Activated CD4-positive, alpha-beta memory T cell treated with anti-CD3 and anti-CD28 coated beads, Interleukin-2, amount 10 ng/mL, durations not matched to agents 7 days and 5 days (primary cell): ENCODE measurements at regions of chr15 and their contacts with region 1.

Region 1: GRCh38 chr15:75367913-75368688 is at the start of gene MAN2C1:
- DNase-seq: peak; percentile 93
- H3K4me3 Mint-ChIP-seq: peak within 1 kb of the TSS; percentile 93
- H3K27ac Mint-ChIP-seq: peak within 1 kb of the TSS; percentile 96
- H3K4me1 Mint-ChIP-seq: peaks cover 33% of the 10 kb centered on the region
- H3K27me3 Mint-ChIP-seq: no peaks in the 10 kb centered on the region
- total RNA-seq, gene MAN2C1: 174 to 196 TPM

Region 2: GRCh38 chr15:75178171-75179075 is 189.7 kb before region 1 on chr15:
- CTCF ChIA-PET with region 1: no interaction called
- POLR2A ChIA-PET with region 1: no interaction called
- DNase-seq: no peak
- H3K4me3 Mint-ChIP-seq: no peak overlapping the region
- H3K27ac Mint-ChIP-seq: no peak overlapping the region
- H3K4me1 Mint-ChIP-seq: peaks cover 16% of the 10 kb centered on the region
- H3K27me3 Mint-ChIP-seq: peaks cover 56% of the 10 kb centered on the region

Region 3: DNA sequence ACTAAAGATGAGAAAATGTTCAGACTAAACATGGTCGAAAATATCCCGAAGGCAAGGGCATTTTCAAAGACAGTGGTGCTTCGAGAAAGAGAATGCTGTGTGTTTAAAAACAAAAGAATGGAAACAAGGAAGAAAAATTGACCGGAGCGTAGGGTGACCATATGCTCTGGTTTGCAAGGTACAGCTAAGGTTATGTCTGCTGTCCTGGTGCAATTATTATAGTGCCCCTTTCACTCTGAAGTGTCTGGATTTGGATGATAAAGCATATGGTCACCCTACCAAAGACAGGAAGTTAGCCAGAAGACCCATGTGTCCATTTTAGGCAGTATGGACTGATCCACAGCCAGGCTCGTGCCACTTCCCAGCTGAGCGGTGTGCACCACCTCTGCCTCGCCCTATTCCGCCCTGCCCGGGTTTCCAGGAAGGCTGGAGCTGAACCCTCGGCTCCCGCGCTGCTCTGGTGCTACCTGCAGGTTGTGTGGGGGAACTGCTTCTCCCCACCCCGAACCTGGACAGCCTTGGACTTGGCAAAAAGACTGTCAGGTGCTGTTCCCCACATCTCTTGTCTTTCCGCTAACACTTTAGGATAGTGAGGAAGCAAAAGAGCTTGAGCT is 60.2 kb before region 1 on chr15:
- CTCF ChIA-PET with region 1: no interaction called
- POLR2A ChIA-PET with region 1: no interaction called
- DNase-seq: peak; percentile 28
- H3K4me3 Mint-ChIP-seq: no peak overlapping the region
- H3K27ac Mint-ChIP-seq: no peak overlapping the region
- H3K4me1 Mint-ChIP-seq: peaks cover 27% of the 10 kb centered on the region
- H3K27me3 Mint-ChIP-seq: peaks cover 62% of the 10 kb centered on the region

Region 4: DNA sequence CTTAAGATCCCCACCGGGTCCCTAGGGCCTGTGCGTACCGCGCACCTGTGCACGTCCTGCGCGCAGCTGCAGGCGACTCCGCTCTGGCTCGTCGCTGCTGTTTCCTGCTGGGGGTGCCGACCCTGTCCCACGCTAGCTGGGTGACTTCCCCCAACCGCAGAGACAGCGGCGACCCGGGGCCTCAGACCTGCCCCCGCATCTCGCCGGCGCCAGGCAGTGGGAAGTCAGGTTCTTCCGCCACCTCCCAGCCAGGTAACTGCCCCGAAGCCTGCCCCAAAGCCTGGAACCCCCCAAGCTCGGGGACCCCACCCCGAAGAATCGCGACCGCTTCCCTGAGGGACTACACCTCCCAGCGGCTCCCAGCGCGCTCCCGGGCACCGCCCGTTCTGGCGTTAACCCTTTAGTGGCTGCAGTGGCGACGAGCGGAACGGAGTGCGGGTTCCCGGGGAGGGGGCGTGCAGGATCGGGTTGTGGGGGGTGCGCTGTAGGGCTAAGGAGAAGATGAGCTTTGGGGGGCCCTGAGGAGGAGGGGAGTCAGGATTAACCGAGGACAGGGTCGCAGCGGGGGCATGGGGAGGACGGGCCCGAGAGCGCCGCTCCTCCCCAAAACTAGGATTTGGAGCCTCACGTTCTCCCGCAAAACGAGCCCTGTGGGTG is 20.8 kb before region 1 on chr15:
- CTCF ChIA-PET with region 1: interaction called, 17 read pairs
- POLR2A ChIA-PET with region 1: interaction called, 89 read pairs
- DNase-seq: peak; percentile 29
- H3K4me3 Mint-ChIP-seq: peak overlapping the region; percentile 60
- H3K27ac Mint-ChIP-seq: no peak overlapping the region
- H3K4me1 Mint-ChIP-seq: peaks cover 39% of the 10 kb centered on the region
- H3K27me3 Mint-ChIP-seq: peaks cover 25% of the 10 kb centered on the region

Region 5: DNA sequence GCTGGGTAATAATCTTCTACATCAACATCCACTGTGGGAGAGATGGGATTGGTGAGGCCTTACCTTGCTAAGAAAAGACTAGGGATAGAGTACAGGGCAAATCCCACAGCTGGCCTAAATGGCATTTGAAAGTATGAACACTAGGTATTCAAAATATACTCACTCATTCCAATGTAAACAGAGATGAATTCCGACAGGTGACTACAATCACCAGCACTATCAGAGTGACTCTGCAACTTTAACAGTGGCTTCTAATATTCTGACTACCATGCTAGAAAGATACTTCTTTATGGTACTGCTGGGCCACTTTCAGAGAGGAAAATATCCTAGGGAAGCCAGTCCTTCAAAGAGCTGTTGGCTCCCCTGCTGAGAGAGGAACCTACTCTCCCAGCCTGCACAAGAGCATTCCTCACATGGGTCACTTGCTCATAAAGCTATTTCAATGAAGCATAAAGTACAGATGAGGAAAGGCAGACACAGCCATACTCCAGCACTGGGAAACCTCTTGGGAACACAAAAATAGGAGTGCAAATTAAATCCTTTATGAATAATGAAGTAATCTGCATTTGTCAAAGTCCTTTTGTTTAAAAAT is 21.8 kb after region 1 on chr15:
- CTCF ChIA-PET with region 1: interaction called, 5 read pairs
- POLR2A ChIA-PET with region 1: interaction called, 13 read pairs
- DNase-seq: no peak
- H3K4me3 Mint-ChIP-seq: no peak overlapping the region
- H3K27ac Mint-ChIP-seq: no peak overlapping the region
- H3K4me1 Mint-ChIP-seq: peaks cover 14% of the 10 kb centered on the region
- H3K27me3 Mint-ChIP-seq: no peaks in the 10 kb centered on the region

Region 6: DNA sequence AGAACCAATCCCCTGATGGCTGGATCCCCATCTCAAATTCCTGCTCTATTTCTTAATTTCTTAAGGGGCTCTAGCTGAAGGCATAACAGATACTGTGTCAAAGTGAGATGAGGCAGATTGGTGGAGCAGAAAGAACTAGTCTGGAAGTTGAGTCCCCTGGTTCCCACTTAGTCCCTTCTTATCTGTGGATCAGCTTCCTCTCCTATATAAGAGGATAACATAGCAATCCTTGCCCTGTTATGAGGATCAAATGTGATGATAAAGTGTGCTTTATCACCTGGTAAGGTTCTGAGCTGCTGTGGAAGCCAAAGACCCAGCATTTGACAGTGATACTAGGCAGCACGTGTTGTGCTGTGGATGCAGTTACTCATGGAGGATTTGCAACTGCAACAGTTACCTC is 91.5 kb after region 1 on chr15:
- CTCF ChIA-PET with region 1: interaction called, 109 read pairs
- POLR2A ChIA-PET with region 1: interaction called, 174 read pairs
- DNase-seq: no peak
- H3K4me3 Mint-ChIP-seq: no peak overlapping the region
- H3K27ac Mint-ChIP-seq: no peak overlapping the region
- H3K4me1 Mint-ChIP-seq: peaks cover 6% of the 10 kb centered on the region
- H3K27me3 Mint-ChIP-seq: no peaks in the 10 kb centered on the region

Region 7: DNA sequence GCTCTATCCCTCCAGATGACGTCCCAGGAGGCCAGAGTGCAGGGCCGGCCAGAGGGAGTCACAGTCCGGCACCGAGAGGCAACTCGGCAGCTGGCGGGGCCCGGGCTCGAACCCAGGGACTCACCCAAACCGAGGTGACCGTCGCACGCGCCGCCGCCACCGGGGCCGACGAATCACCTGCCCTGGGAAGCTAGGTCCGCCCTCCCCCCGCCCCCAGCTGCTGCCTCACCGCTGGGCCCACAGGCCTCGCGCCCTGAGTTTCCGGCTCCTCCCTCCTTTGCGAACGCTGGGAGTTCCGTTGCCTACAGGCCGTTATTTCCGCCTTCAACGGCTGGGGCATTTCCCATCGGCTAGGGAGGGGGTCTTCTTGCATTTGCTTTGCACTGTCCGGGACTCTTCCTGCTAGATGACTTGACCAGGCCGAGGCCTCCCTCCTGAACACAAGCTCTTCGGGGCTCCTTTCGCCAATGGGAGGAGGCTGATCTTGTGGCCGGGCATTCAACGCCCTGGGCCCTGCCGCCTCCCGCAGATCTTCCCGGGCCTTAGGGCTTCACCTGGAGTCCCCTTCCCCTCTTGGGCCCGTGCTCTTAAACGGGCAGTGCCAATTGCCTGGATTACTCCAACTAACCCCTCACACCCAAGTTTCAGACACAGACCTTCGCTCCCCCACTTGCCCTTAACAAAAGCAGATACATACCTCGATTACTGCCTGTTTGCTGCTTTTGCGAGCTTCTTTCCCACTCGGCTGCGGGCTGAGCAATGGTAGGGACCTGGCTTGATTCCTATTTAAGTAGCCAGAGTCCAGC is 257.6 kb after region 1 on chr15 and contains the start of gene SNUPN:
- CTCF ChIA-PET with region 1: interaction called, 23 read pairs
- POLR2A ChIA-PET with region 1: interaction called, 22 read pairs
- DNase-seq: peak; percentile 96
- H3K4me3 Mint-ChIP-seq: peak within 1 kb of the TSS; percentile 93
- H3K27ac Mint-ChIP-seq: peak within 1 kb of the TSS; percentile 96
- H3K4me1 Mint-ChIP-seq: peaks cover 38% of the 10 kb centered on the region
- H3K27me3 Mint-ChIP-seq: no peaks in the 10 kb centered on the region
- total RNA-seq, gene SNUPN: 29.6 to 30.9 TPM

Region 8: GRCh38 chr15:75647370-75648155 is 279.5 kb after region 1 on chr15 and contains the start of gene SNX33:
- CTCF ChIA-PET with region 1: interaction called, 53 read pairs
- POLR2A ChIA-PET with region 1: interaction called, 74 read pairs
- DNase-seq: peak; percentile 60
- H3K4me3 Mint-ChIP-seq: peak within 1 kb of the TSS; percentile 79
- H3K27ac Mint-ChIP-seq: no peak within 1 kb of the TSS
- H3K4me1 Mint-ChIP-seq: peaks cover 29% of the 10 kb centered on the region
- H3K27me3 Mint-ChIP-seq: peaks cover 10% of the 10 kb centered on the region
- total RNA-seq, gene SNX33: 1.8 to 1.9 TPM